ENCODE measurements at regions of chr16 and their contacts with region 1.

Region 1: GRCh38 chr16:55842369-55843104 is 9.6 kb upstream of the CES1 start:
- DNase-seq: peak; percentile 47
- H3K4me3 Mint-ChIP-seq: no peak overlapping the region
- H3K27ac Mint-ChIP-seq: no peak overlapping the region
- H3K4me1 Mint-ChIP-seq: no peaks in the 10 kb centered on the region
- H3K27me3 Mint-ChIP-seq: peaks cover 62% of the 10 kb centered on the region
- CTCF ChIP-seq: peak; percentile 56

Region 2: DNA sequence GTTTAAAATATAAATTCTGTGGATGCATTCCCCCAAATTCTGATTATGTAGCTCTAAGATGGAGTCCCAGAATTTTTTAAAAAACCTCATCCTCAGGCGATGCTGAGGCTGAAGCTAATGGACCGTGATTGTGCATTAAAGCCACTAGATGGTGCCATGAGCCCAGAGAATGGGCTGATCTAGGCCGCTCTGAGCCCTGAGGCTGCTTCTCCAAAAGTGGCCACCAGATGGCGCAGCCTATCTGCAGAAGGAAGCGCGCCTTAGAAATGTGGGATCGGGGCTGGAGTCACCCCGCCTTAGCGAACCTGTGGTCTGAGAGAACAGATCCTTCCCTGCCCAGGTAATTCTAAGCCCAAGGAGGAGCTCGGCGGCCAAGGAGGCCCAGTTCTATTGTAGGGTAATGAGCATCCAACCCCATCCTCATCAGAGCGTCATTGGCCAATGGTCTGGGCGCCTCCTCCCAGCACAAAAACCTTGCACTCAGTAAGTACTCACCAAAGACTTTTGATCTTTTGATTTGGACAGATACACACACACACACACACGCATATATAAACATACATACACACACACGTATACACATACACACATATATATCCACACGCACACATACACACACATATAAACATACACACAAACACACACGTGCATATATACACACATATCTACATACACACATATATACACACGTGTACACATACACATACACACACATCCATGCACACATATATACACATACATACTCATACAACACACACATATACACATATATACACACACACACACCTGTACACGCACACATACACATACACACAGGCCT is 377.2 kb before region 1 on chr16:
- CTCF ChIA-PET with region 1: interaction called, 6 read pairs
- intact Hi-C with region 1: loop called (anchors 2 kb)
- DNase-seq: peak; percentile 90
- H3K4me3 Mint-ChIP-seq: no peak overlapping the region
- H3K27ac Mint-ChIP-seq: no peak overlapping the region
- H3K4me1 Mint-ChIP-seq: no peaks in the 10 kb centered on the region
- H3K27me3 Mint-ChIP-seq: peaks cover 41% of the 10 kb centered on the region
- CTCF ChIP-seq: peak; percentile 100

Region 3: GRCh38 chr16:55711959-55712876 is 130.3 kb before region 1 on chr16:
- CTCF ChIA-PET with region 1: interaction called, 3 read pairs
- intact Hi-C with region 1: loop called (anchors 1 kb)
- DNase-seq: peak; percentile 77
- H3K4me3 Mint-ChIP-seq: no peak overlapping the region
- H3K27ac Mint-ChIP-seq: no peak overlapping the region
- H3K4me1 Mint-ChIP-seq: no peaks in the 10 kb centered on the region
- H3K27me3 Mint-ChIP-seq: peaks cover 85% of the 10 kb centered on the region
- CTCF ChIP-seq: peak; percentile 69